IMR-90 (cell line): ENCODE measurements at regions of chr12 and their contacts with region 1.

Region 1: GRCh38 chr12:80234667-80235066 is 135.3 kb downstream of the OTOGL start:
- DNase-seq: no peak
- ATAC-seq: peak; percentile 59
- H3K4me3 ChIP-seq: no peak overlapping the region
- H3K27ac ChIP-seq: no peak overlapping the region
- H3K4me1 ChIP-seq: no peaks in the 10 kb centered on the region
- H3K27me3 ChIP-seq: no peaks in the 10 kb centered on the region
- CTCF ChIP-seq: no peak
- POLR2A ChIP-seq: no peak
- RAD21 ChIP-seq: no peak

Region 2: GRCh38 chr12:80200408-80200807 is 34.3 kb before region 1 on chr12:
- CTCF ChIA-PET with region 1: no interaction called
- POLR2A ChIA-PET with region 1: no interaction called
- dilution Hi-C with region 1: no loop called
- in situ Hi-C with region 1: no loop called
- intact Hi-C with region 1: loop called (anchors 5 kb)
- DNase-seq: no peak
- ATAC-seq: no peak
- H3K4me3 ChIP-seq: no peak overlapping the region
- H3K27ac ChIP-seq: no peak overlapping the region
- H3K4me1 ChIP-seq: no peaks in the 10 kb centered on the region
- H3K27me3 ChIP-seq: no peaks in the 10 kb centered on the region
- CTCF ChIP-seq: no peak
- POLR2A ChIP-seq: no peak
- RAD21 ChIP-seq: no peak

Region 3: DNA sequence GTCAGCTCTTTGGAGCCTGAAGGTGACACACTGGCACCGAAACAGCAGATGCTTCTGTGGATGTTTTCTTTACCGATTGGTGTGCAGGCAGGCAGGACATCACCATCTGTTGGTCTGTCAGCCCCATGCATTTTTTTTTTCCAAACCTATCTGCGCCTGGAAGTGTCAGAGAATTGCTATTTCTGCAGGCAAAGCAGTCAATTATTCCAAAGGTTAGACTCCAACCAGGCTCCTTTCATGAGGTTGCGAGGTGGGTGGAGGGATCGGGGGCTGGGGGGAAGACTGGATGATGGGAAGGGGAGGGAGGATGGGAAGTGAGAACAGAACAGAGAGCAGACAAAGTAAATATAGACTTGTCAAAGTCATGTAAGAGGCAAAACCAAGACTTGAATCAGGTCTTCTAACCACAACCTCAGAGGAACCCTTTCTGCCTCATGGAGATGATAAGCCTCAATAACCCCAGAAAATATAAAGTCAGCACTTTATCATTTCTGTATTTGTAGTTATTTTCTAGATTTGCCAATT is 17.6 kb before region 1 on chr12:
- CTCF ChIA-PET with region 1: no interaction called
- POLR2A ChIA-PET with region 1: no interaction called
- dilution Hi-C with region 1: no loop called
- in situ Hi-C with region 1: no loop called
- intact Hi-C with region 1: no loop called
- DNase-seq: no peak
- ATAC-seq: no peak
- H3K4me3 ChIP-seq: no peak overlapping the region
- H3K27ac ChIP-seq: no peak overlapping the region
- H3K4me1 ChIP-seq: no peaks in the 10 kb centered on the region
- H3K27me3 ChIP-seq: no peaks in the 10 kb centered on the region
- CTCF ChIP-seq: no peak
- POLR2A ChIP-seq: no peak
- RAD21 ChIP-seq: no peak

Region 4: DNA sequence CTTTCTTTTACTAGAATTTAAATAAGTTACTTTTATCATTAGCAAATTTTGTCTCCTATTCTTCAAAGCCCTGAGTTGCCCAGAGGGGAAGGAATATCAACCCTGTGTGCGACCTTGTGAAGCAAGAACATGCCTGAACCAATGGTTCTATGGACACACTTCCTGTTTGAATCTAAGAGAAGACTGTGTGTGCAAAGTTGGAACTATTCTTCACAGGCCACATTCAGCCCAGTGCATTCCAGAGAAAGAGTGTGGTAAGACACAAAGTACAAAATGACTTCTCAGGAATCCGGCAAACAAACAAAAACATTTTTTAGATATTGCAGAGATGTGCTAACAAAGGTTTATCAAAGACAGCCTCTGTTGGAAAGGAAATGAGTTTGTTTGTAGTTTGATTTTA is 118.6 kb after region 1 on chr12:
- CTCF ChIA-PET with region 1: no interaction called
- POLR2A ChIA-PET with region 1: no interaction called
- dilution Hi-C with region 1: no loop called
- in situ Hi-C with region 1: no loop called
- intact Hi-C with region 1: no loop called
- DNase-seq: peak; percentile 22
- ATAC-seq: peak; percentile 80
- H3K4me3 ChIP-seq: no peak overlapping the region
- H3K27ac ChIP-seq: no peak overlapping the region
- H3K4me1 ChIP-seq: no peaks in the 10 kb centered on the region
- H3K27me3 ChIP-seq: no peaks in the 10 kb centered on the region
- CTCF ChIP-seq: no peak
- POLR2A ChIP-seq: no peak
- RAD21 ChIP-seq: no peak

Region 5: GRCh38 chr12:80472902-80473500 is 238.3 kb after region 1 on chr12:
- CTCF ChIA-PET with region 1: no interaction called
- POLR2A ChIA-PET with region 1: no interaction called
- dilution Hi-C with region 1: no loop called
- in situ Hi-C with region 1: no loop called
- intact Hi-C with region 1: no loop called
- DNase-seq: peak; percentile 81
- ATAC-seq: peak; percentile 87
- H3K4me3 ChIP-seq: no peak overlapping the region
- H3K27ac ChIP-seq: peak overlapping the region; percentile 71; the same call in 1 of the 2 replicates
- H3K4me1 ChIP-seq: peaks cover 2% of the 10 kb centered on the region; the same call in 1 of the 2 replicates
- H3K27me3 ChIP-seq: no peaks in the 10 kb centered on the region
- CTCF ChIP-seq: peak; percentile 65
- POLR2A ChIP-seq: no peak
- RAD21 ChIP-seq: peak; percentile 69

Region 6: GRCh38 chr12:80598004-80598606 is 363.4 kb after region 1 on chr12:
- CTCF ChIA-PET with region 1: no interaction called
- POLR2A ChIA-PET with region 1: no interaction called
- dilution Hi-C with region 1: no loop called
- in situ Hi-C with region 1: no loop called
- intact Hi-C with region 1: no loop called
- DNase-seq: peak; percentile 83
- ATAC-seq: peak; percentile 67
- H3K4me3 ChIP-seq: no peak overlapping the region
- H3K27ac ChIP-seq: no peak overlapping the region
- H3K4me1 ChIP-seq: peaks cover 11% of the 10 kb centered on the region; the same call in 1 of the 2 replicates
- H3K27me3 ChIP-seq: no peaks in the 10 kb centered on the region
- CTCF ChIP-seq: peak; percentile 63
- POLR2A ChIP-seq: no peak
- RAD21 ChIP-seq: peak; percentile 62